ENCODE measurements at regions of chr6 and their contacts with region 1.

Region 1: DNA sequence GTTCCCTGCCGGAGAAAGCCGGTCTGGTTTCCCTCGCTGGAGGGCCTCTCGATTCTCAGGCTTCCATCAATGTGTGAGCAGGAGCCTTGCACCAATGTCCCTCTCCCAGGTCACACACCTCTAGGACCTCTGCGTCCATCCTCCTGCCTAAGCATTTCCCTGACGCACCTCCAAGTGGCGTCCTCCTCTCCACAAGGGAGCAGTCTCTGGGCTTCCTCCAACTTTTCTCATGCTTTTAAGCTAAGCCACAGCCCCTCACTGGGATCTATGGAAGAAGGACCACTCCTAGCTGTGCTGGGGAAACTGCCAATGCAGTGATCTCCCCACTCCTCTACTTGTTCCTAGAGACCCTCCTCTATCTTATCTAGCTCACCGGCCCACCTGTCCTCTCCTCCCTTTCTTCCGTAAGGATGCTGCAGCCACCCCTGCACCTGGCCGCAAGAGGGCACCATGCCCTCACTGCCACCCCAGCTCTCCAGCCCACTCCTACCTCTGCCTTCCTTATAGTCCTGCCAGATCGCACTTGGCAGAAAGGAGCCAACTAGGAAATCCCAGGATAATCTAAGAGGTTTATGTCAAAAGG is 258.7 kb downstream of the LRFN2 start:
- DNase-seq: no peak
- ATAC-seq: no peak

Region 2: DNA sequence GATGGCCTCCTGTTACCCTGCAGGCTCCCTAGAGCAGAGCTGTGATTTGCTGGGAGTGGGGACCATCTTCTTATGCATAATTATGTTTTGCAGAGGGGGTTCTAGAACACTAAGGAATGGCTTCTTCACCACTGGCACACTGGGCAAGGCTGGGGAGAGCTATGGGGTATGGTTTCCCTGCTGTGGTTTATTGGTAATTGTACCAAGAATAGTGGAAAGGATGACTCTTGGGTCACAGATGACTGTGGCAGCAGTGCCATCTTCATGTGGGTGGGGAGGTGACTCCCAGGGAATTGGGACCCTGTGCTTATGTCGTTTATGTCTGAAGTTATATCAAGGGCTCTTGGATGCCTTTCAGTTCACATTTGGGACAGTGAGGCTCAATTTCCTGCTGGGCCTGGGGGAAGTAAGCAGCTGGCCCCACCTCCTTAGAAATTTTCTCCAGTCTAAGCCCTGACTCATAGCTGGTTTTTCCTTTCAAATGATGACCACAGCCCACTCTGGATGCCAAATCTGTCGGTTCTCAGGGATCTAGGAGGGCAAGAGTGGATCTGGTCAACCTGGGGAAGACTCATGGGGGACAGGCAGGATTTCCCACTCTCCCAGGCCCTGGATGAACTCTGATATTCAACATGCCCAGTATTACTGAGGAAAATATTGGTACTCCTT is 27.9 kb after region 1 on chr6:
- intact Hi-C with region 1: no loop called
- DNase-seq: no peak
- ATAC-seq: no peak

Region 3: DNA sequence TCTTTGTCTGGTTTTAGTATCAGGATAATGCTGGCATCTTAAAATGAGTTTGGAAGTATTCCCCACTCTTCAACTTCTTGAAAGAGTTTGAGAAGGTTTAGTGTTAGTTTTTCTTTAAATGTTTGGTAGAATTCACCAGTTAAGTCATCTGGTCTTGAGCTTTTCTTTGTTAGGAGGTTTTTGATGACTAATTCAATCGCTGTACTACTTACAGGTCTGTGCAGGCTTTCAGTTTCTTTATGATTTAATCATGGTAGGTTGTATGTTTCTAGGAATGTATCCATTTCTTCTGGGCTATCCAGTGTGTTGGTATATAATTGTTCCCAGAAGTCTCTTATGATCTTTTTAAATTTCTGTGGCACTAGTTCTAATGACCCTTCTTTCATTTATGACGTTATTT is 43.1 kb after region 1 on chr6:
- intact Hi-C with region 1: no loop called
- DNase-seq: no peak
- ATAC-seq: no peak

Region 4: GRCh38 chr6:40587240-40588069 is 259.0 kb after region 1 on chr6 and contains the start of gene LRFN2:
- intact Hi-C with region 1: loop called (anchors 5 kb)
- DNase-seq: peak; percentile 70
- ATAC-seq: peak; percentile 90
- total RNA-seq, gene LRFN2: not detected

Measured in Right ventricle myocardium inferior (tissue), 1 donor.